Right ventricle myocardium superior (tissue), 1 donor: ENCODE measurements at regions of chr10 and their contacts with region 1.

Region 1: DNA sequence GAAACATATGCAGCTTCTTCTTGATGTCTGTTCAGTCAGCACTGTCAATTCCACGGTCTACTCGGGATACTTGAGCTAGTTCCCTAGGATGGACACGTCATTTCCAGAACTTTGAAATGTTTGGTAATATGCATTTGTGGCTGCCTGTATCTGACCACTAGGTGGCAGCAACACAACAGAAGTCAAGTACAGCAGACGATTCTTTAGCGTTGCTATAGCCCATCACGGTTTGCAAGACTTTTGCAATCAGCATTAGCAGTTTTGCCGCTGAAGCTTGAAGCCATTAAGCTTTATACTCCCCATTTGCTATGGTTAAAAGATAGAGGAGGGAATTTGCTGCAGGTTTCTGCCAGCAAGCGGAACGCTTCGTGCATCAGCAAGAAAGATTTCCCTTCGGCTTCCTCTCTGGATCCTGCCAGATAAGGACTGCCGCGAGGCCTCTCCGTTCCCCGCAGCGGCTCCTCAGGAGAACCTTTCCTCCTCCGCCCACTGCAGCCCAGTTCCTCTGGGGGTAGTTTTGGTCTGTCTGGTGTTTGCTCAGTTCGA is 63.5 kb downstream of the ABCC2 start:
- DNase-seq: peak; percentile 54
- ATAC-seq: peak; percentile 97

Region 2: DNA sequence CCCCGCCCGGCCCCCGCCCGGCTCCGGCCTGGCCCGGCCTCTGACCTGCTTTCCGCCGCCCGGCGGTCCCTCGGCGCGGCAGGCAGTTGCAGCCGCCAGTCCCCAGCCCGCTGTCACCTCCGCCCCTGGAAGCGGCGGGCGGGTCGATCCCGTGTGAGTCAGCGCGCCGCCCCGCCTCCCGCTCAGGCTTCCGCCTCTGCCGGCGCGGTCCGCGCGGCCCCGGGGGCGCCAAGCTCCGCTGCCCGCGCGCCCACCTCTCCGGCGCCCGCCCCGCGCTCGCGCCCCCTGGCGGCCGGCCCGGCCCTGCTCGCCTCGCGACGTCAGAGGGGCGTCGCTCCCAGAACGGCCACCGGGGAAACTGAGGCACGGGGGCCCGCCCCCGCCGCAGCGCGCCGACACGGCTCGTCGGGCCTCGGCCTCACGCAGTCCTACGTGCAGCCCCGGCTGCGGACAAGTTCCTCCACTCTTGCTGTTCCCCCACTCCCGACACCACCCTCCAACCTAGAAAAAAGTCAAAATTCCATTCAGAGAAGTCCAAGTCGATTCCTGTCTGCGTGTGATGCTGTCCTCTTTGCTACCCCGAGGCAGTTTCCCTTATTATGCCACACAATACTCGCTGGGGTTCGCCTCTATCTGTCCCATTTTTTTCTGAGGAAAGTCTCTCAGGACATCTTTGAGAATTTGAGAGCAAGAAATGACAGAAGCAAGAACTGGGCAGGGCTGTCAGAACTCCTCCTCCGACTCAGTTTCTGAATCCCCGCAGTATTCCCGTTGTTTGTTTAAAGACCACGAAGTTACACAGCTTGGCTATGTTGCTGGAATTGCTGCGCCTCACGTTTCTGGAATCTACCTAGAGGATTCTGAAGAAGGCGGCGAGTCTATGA is 164.1 kb after region 1 on chr10 and contains the start of gene DNMBP:
- intact Hi-C with region 1: loop called (anchors 10 kb)
- DNase-seq: peak; percentile 91
- ATAC-seq: peak; percentile 97
- total RNA-seq, gene DNMBP: 5.7 TPM

Region 3: GRCh38 chr10:100046021-100046486 is 200.1 kb after region 1 on chr10:
- intact Hi-C with region 1: loop called (anchors 2 kb)
- DNase-seq: peak; percentile 92
- ATAC-seq: peak; percentile 84

Region 4: DNA sequence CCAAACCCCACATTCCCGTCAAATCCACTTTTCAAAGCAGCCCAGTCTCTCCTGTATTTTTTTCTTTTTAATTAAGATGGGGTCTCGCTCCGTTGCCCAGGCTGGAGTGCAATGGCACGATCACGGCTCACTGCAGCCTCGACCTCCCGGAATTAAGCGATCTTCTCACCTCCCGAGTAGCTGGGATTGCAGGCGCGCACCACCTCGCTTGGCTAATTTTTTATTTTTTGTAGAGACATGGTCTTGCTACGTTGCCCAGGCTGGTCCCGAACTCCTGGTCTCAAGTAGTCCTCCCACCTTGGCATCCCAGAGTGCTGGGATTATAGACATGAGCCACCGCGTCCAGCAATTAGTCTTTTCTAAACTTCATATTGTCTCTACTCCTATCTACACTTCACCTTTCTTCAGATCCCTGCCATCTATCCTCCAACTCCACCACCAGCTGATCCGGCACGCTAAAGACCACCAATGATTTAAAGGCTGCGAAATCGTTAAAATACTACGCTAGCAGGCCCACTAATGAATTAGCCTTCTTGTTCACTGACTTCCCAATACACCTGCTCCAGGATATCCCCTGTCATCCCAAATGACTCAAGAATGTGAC is 384.0 kb after region 1 on chr10:
- intact Hi-C with region 1: loop called (anchors 10 kb)
- DNase-seq: no peak
- ATAC-seq: no peak